Activated T-helper 1 cell treated with anti-CD3 and anti-CD28 coated beads, Interleukin-12 subunit alpha, Interleukin-12 subunit beta, Interleukin-2, Interleukin-4 antibody, amounts not matched to agents 30 ng/mL and 10 ng/mL and 1 ng/mL, durations not matched to agents 14 hours and 24 hours and 36 hours (primary cell): ENCODE measurements at regions of chr3 and their contacts with region 1.

Region 1: GRCh38 chr3:168581771-168582225 is 486.1 kb upstream of the GOLIM4 start:
- DNase-seq: no peak
- H3K4me3 Mint-ChIP-seq: no peak overlapping the region
- H3K27ac Mint-ChIP-seq: no peak overlapping the region
- H3K4me1 Mint-ChIP-seq: no peaks in the 10 kb centered on the region
- H3K27me3 Mint-ChIP-seq: no peaks in the 10 kb centered on the region

Region 2: DNA sequence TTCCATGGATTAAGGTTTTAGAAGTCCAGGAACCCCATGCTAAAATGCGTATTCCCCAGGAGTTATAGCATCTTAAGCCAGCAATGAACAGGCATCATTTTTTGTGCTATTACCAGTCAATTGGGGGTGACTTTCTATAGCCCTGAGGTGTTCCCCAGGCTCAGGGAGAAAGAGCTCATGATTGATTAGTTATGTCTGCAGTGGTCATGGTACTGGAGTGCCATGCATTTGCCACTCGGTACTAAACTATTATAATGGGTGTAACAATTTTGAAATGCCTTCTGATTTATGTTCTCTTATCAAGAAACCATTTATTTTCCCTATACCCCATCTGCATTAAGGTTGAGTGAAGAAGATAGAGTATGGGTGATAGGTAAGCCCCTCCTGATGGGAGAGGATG is 1276.0 kb after region 1 on chr3:
- intact Hi-C with region 1: loop called (anchors 10 kb)
- DNase-seq: no peak
- H3K4me3 Mint-ChIP-seq: no peak overlapping the region
- H3K27ac Mint-ChIP-seq: no peak overlapping the region
- H3K4me1 Mint-ChIP-seq: no peaks in the 10 kb centered on the region
- H3K27me3 Mint-ChIP-seq: peaks cover 28% of the 10 kb centered on the region